ENCODE measurements at regions of chr20 and their contacts with region 1.

Region 1: DNA sequence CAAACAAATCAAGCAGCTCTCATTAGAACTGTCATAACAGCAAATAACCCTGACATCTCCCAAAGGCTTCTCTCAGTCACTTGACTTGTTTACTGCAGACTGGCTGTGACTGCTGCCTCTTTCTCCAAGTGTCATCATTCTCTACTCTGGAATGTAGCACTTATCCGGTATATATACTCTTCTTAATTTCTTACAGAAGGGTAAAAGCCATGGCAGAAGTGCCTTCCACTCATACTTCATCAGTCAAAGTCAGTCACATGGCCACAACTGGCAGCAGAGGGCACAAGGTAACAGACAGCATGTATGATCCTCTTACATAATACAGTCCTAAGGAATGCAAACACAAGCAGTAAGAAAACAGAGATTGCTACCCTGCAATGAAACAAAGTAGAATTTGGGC is 9.3 kb downstream of the NAPB start:
- DNase-seq: no peak
- H3K4me3 ChIP-seq: no peak overlapping the region
- H3K27ac ChIP-seq: no peak overlapping the region
- H3K4me1 ChIP-seq: peaks cover 0 to 5% (median 0%) of the 10 kb centered on the region in 4 donors
- H3K27me3 ChIP-seq: no peaks in the 10 kb centered on the region
- CTCF ChIP-seq: no peak

Region 2: GRCh38 chr20:23374441-23374840 is 37.6 kb before region 1 on chr20:
- intact Hi-C with region 1: loop called (anchors 5 kb)
- DNase-seq: no peak
- H3K4me3 ChIP-seq: no peak overlapping the region
- H3K27ac ChIP-seq: no peak overlapping the region
- H3K4me1 ChIP-seq: no peaks in the 10 kb centered on the region
- H3K27me3 ChIP-seq: no peaks in the 10 kb centered on the region
- CTCF ChIP-seq: no peak

Region 3: DNA sequence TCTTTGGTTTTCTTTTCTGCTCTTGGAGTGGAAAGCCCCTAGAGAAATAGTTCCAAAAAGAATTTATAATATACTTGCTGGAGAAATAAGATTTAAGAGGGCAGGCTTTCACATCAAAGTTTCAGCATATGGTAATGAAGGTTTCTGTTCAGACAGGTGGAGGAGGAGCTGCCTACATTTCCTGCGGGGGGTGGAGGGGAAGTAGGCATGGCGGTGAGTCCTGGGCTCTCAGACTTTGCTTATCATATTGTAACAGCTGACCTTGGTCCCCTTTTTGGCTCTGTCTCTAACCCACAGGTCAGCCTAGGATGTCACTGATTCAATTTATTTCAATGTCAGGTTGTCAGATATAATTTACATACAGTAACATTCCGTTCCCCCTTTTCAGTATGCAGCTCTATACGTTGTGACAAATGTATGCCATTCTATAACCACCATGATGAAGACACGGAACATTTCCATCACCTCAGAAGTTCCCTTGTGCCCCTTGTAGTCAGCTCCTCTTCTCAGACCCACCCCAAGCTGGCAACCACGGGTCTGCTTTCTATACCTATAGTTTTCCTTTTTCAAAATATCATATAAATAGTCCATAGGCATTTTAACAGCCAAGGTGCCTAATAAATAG is 654.2 kb after region 1 on chr20:
- intact Hi-C with region 1: no loop called
- DNase-seq: no peak
- H3K4me3 ChIP-seq: no peak overlapping the region
- H3K27ac ChIP-seq: no peak overlapping the region
- H3K4me1 ChIP-seq: no peaks in the 10 kb centered on the region
- H3K27me3 ChIP-seq: no peaks in the 10 kb centered on the region
- CTCF ChIP-seq: no peak

Measured in tibial artery (tissue), 4 donors.